ENCODE measurements at regions of chr1 and their contacts with region 1.

Region 1: GRCh38 chr1:20493839-20494608 is 8.0 kb upstream of the CAMK2N1 start:
- DNase-seq: peak; percentile 83
- H3K4me3 ChIP-seq: no peak overlapping the region
- H3K27ac ChIP-seq: no peak overlapping the region
- H3K4me1 ChIP-seq: peaks cover 21% of the 10 kb centered on the region
- CTCF ChIP-seq: peak; percentile 98

Region 2: GRCh38 chr1:19918057-19918456 is 576.0 kb before region 1 on chr1:
- CTCF ChIA-PET with region 1: no interaction called
- POLR2A ChIA-PET with region 1: no interaction called
- intact Hi-C with region 1: loop called (anchors 5 kb)
- DNase-seq: peak; percentile 86
- H3K4me3 ChIP-seq: no peak overlapping the region
- H3K27ac ChIP-seq: no peak overlapping the region
- H3K4me1 ChIP-seq: no peaks in the 10 kb centered on the region
- CTCF ChIP-seq: peak; percentile 96

Region 3: GRCh38 chr1:20100632-20101355 is 393.2 kb before region 1 on chr1:
- CTCF ChIA-PET with region 1: no interaction called
- POLR2A ChIA-PET with region 1: no interaction called
- intact Hi-C with region 1: loop called (anchors 2 kb)
- DNase-seq: peak; percentile 76
- H3K4me3 ChIP-seq: no peak overlapping the region
- H3K27ac ChIP-seq: no peak overlapping the region
- H3K4me1 ChIP-seq: no peaks in the 10 kb centered on the region
- CTCF ChIP-seq: peak; percentile 87

Region 4: DNA sequence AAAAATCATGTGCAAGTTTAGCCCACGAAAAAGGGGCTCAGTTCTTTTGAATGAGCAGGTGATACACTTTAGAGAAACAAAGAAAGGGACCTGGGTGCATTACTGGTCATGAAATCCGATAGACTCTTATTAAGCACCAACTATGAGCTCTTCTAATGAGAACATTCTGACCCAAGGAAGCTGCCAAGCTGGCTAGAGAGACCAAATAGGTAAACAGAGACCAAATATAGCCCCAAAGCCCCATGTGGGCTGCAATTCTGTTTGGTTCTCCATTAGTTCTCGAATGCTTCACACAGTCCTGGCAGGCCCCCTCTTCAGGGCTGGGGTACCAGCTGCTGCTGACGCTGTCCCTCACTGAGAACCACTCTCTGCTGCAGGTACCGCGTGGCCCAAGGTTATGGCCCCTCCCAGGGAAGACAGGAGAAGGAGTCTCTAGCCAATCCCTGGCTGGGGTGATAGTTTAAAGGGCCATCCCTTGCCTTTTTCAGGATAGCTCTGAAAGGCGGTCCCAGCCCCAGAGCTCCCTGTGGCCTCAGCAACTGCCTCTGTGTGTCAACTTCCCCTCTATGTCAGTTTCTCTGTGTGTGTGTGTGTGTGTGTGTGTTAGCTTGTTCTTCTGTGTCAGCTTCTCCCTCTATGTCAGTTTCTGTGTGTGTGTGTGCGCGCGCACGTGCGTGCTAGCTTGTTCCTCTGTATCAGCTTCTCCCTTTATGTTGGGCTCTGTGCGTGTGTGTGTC is 315.2 kb before region 1 on chr1:
- CTCF ChIA-PET with region 1: no interaction called
- POLR2A ChIA-PET with region 1: no interaction called
- intact Hi-C with region 1: no loop called
- DNase-seq: no peak
- H3K4me3 ChIP-seq: no peak overlapping the region
- H3K27ac ChIP-seq: peak overlapping the region; percentile 24
- H3K4me1 ChIP-seq: peaks cover 50% of the 10 kb centered on the region
- CTCF ChIP-seq: no peak

Region 5: DNA sequence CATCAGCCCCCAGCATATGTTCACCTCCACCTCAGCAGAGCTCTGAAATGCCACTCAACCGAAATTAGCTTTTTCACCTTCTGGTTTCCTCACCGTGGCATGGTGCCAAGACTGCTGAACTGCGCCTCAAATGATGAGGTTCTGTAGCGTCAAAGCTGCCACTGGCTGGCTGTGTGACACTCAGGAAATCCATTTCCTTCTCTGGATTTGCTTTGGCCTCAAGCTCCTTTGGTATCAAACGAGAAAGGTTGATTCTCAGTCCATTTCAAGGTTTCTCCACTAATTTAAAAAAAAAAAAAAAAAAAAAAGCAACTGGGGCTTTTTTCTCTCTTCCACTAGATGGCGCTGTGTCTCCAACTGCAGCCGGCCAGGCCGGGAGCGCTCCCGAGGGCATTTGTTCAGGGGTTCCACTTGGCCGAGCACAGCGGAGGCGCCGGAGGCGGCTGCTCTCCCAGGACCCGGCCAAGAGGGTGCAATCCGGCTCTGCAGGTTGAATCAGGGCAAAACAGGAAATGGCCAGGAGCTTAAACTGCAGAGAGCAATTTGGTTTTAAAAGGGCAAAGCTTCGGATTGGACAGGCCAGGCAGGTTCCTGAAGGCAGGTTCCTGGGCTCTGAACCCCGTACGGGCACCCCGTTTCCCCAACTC is 281.2 kb before region 1 on chr1:
- CTCF ChIA-PET with region 1: interaction called, 5 read pairs
- POLR2A ChIA-PET with region 1: interaction called, 8 read pairs
- intact Hi-C with region 1: loop called (anchors 1 kb)
- DNase-seq: peak; percentile 94
- H3K4me3 ChIP-seq: peak overlapping the region; percentile 45
- H3K27ac ChIP-seq: peak overlapping the region; percentile 69
- H3K4me1 ChIP-seq: peaks cover 39% of the 10 kb centered on the region
- CTCF ChIP-seq: peak; percentile 97

Region 6: GRCh38 chr1:20233394-20233793 is 260.6 kb before region 1 on chr1:
- CTCF ChIA-PET with region 1: interaction called, 3 read pairs
- POLR2A ChIA-PET with region 1: no interaction called
- intact Hi-C with region 1: loop called (anchors 1 kb)
- DNase-seq: peak; percentile 78
- H3K4me3 ChIP-seq: no peak overlapping the region
- H3K27ac ChIP-seq: no peak overlapping the region
- H3K4me1 ChIP-seq: peaks cover 4% of the 10 kb centered on the region
- CTCF ChIP-seq: peak; percentile 85

Region 7: GRCh38 chr1:20376880-20377494 is 117.0 kb before region 1 on chr1:
- CTCF ChIA-PET with region 1: no interaction called
- POLR2A ChIA-PET with region 1: no interaction called
- intact Hi-C with region 1: loop called (anchors 2 kb)
- DNase-seq: peak; percentile 81
- H3K4me3 ChIP-seq: no peak overlapping the region
- H3K27ac ChIP-seq: peak overlapping the region; percentile 5
- H3K4me1 ChIP-seq: peaks cover 60% of the 10 kb centered on the region
- CTCF ChIP-seq: peak; percentile 91

Measured in OCI-LY7 (cell line).